Cardiac septum (tissue), 1 donor: ENCODE measurements at regions of chr3 and their contacts with region 1.

Region 1: DNA sequence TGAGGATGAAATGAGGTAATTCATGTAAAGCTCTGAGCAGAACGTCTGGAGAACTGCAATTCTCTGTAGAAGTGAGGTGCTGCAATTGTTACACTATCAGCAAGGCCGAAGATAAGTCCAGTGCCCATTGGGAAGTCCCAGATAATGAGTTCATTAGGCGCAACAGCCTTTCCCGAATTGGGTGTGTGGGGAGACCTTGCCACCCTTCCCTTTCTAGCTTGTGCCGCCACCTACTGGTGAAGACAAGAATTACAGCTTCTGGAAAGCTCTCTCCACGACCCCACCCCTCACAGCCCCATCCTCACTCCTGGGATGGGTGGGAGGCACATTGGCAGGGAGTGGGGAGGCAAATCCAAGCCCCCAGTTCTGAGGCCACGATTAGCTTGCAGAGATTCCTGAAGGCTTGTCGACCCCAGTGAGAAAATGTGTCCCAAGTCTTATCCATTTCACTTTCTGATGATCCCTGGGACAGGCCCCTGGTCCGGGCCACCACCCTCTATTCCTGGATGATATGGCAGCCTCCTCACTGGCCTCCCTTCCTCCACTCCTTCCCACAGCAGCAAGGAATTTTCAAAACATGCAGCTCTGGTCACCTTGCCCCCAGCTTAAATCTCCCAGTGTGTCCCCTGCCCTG is 36.4 kb downstream of the FAM3D start:
- DNase-seq: peak; percentile 82

Region 2: GRCh38 chr3:58317811-58318210 is 312.4 kb before region 1 on chr3:
- intact Hi-C with region 1: loop called (anchors 10 kb)
- DNase-seq: no peak

Region 3: DNA sequence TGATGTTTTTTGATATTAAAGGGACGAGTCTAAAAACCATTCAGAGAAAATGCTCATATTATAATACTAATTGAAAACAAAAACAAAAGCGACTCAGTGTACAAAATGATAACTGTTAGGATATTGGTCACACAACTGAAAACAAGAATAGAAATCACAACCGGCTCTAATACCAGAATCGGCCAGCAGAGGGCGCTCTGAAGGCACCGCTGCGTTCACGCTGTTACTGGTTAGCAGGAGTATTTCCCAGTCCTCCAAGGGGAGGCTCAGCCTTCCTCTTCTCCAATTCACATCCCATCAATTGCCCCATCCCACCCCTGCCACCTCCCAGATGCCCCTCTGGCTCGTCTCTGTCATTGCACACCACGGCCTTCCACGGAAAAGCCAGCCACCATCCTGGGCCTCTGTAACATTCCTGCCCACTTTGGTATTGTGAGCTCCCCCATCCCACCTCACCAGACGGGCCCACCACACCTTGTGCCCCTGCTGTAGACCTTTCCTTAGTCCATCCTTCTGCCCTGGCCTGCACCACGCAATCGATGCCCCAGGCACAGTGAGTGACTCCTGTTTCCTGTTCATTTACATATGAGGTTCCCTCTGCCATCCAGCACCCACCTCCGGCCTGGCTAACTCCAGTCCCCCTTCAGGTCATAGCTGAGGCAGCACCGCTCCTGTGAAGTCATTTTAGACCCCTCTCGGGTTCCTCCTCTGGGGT is 61.5 kb before region 1 on chr3:
- intact Hi-C with region 1: loop called (anchors 1 kb)
- DNase-seq: peak; percentile 88

Region 4: DNA sequence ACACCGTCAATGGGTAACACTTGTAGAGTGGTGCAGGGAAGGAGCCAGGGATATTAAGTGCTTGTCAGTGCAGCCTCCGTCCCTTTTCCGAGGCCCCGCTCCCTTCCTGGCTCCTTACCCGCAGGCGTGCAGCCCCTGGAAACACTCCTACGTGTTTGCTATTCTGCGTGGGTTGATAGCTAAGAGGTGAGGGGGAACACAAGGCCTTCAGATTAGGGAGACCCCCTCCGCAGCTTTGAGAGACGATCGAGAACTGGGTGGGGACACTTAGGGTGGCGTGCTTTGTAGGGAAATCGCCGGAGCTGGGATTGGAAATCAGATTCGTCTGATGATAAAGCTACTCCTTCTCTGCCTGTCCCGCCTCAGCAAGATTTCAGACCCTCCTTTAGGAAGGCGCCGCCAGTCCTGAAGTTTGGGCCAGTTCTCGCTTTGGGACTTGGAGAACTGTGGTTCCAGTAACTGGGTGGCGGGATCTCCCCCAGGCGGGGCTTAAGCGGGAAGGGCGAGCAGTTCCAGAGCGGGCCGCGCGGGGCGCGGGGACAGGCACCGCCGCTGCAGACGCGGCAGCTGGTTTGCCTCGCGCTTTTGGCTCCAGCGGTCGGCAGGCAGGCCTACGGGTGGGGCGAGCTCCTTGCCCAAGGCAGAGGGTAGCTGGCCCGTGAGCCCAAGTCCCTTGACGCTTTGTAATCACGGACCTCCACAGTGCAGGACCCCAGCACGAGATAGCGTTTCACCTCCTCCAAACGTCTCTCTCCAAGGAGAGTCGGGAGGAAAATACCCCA is 45.0 kb before region 1 on chr3:
- intact Hi-C with region 1: loop called (anchors 5 kb)
- DNase-seq: peak; percentile 92

Region 5: GRCh38 chr3:58857402-58857801 is 227.2 kb after region 1 on chr3:
- intact Hi-C with region 1: no loop called
- DNase-seq: no peak